K562 (cell line): ENCODE measurements at regions of chr19 and their contacts with region 1.

Region 1: DNA sequence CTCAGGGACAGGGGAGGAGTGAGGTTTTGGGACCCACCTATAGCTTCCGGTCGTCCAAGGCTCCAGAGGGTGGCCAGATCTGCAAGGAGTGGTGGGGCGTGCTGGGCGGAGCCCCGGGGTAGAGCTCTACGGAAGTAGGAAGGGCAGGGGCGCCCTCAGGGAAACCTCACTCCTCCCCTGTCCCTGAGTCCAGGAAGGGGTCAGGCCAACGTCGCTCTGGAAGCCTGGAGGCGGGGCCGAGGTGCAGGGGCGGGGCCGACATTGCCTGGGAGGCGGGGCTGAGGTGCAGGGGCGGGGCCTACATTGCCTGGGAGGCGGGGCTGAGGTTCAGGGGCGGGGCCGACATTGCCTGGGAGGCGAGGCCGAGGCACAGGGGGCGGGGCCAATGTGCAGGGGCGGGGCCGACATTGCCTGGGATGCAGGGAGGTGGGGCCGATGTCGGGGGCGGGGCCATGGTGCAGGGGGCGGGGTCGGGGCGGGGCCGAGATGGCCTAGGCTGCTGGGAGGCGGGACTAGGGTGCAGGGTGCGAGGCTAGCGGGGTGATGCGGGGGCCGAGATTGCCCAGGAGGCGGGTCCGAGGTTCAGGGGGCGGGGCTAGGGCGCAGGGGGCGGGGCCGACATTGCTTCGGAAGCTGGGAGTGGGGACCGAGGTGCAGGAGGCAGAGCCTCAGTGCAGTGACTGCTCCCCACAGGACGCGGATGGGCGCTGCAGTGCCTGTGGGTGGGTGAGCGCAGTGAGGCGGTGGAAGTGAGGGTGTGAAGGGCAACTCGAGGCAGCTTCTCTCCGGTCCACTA is 4.9 kb upstream of the PALM start:
- DNase-seq: peak; percentile 95 to 97 (median 96)
- ATAC-seq: peak; percentile 98
- H3K4me3 ChIP-seq: peak overlapping the region; percentile 46
- H3K27ac ChIP-seq: peak overlapping the region; percentile 74
- H3K4me1 ChIP-seq: peaks cover 16 to 31% of the 10 kb centered on the region in 2 experiments
- H3K27me3 ChIP-seq: no peaks in the 10 kb centered on the region
- CTCF ChIP-seq: peak in 2 of 3 experiments; percentile 32 to 45; a peak in 3 of 6 replicates
- EP300 ChIP-seq: peak; percentile 40; the same call in 1 of the 2 replicates
- POLR2A ChIP-seq: peak; percentile 70; the same call in 1 of the 2 replicates
- RAD21 ChIP-seq: 0 out of 4 replicates have a peak, but pooled peaks of 1 of the 2 experiments have one; percentile 3

Region 2: DNA sequence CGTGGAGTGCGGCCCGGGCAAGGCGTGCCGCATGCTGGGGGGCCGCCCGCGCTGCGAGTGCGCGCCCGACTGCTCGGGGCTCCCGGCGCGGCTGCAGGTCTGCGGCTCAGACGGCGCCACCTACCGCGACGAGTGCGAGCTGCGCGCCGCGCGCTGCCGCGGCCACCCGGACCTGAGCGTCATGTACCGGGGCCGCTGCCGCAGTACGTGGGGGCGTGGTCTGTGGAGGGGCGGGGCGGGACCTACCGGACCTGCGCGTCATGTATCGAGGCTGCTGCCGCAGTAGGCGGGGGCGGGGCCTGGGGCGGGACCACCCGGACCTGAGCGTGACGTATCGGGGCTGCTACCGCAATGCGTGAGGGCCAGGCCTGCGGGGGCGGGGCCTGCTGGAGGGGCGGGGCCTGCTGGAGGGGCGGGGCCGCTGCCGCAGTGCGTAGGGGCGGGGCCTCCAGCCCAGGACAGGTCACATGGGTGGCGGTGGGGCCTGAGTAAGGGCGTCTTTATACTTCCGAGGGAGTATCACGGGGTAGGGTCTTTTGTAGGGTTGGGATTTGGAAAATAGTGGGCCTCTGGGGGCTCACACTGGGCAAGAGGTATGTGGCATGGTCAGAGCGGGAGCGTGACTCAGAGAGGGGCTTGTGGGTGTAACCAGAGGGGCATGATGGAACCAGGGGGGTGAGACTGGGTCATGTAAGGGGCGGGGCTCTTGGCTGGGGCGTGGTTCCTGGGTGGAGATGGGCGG is 23.4 kb before region 1 on chr19:
- CTCF ChIA-PET with region 1: no interaction called
- POLR2A ChIA-PET with region 1: interaction called, 4 read pairs
- in situ Hi-C with region 1: no loop called
- intact Hi-C with region 1: loop called (anchors 1 kb)
- DNase-seq: peak; percentile 94 to 98 (median 97)
- ATAC-seq: peak; percentile 88
- H3K4me3 ChIP-seq: peak overlapping the region; percentile 94
- H3K27ac ChIP-seq: peak overlapping the region; percentile 94
- H3K4me1 ChIP-seq: peaks cover 5 to 73% of the 10 kb centered on the region in 2 experiments
- H3K27me3 ChIP-seq: no peaks in the 10 kb centered on the region; a peak in 1 of 5 replicates
- CTCF ChIP-seq: peak in 2 of 3 experiments; percentile 64 to 80; a peak in 4 of 6 replicates
- EP300 ChIP-seq: no peak
- POLR2A ChIP-seq: peak; percentile 86
- RAD21 ChIP-seq: peak in 1 of 2 experiments; percentile 54; a peak in 3 of 4 replicates